ENCODE measurements at regions of chr1 and their contacts with region 1.

Region 1: GRCh38 chr1:167401260-167401873 is 117.0 kb downstream of the CD247 start:
- DNase-seq: peak; percentile 69
- ATAC-seq: peak; percentile 77
- H3K4me3 Mint-ChIP-seq: no peak overlapping the region
- H3K27ac Mint-ChIP-seq: no peak overlapping the region
- H3K4me1 Mint-ChIP-seq: peaks cover 2% of the 10 kb centered on the region
- H3K27me3 Mint-ChIP-seq: no peaks in the 10 kb centered on the region
- CTCF ChIP-seq: peak; percentile 68

Region 2: GRCh38 chr1:167252986-167253385 is 148.4 kb before region 1 on chr1:
- CTCF ChIA-PET with region 1: no interaction called
- POLR2A ChIA-PET with region 1: no interaction called
- intact Hi-C with region 1: no loop called
- DNase-seq: no peak
- ATAC-seq: no peak
- H3K4me3 Mint-ChIP-seq: no peak overlapping the region
- H3K27ac Mint-ChIP-seq: no peak overlapping the region
- H3K4me1 Mint-ChIP-seq: peaks cover 47% of the 10 kb centered on the region
- H3K27me3 Mint-ChIP-seq: no peaks in the 10 kb centered on the region
- CTCF ChIP-seq: no peak

Region 3: DNA sequence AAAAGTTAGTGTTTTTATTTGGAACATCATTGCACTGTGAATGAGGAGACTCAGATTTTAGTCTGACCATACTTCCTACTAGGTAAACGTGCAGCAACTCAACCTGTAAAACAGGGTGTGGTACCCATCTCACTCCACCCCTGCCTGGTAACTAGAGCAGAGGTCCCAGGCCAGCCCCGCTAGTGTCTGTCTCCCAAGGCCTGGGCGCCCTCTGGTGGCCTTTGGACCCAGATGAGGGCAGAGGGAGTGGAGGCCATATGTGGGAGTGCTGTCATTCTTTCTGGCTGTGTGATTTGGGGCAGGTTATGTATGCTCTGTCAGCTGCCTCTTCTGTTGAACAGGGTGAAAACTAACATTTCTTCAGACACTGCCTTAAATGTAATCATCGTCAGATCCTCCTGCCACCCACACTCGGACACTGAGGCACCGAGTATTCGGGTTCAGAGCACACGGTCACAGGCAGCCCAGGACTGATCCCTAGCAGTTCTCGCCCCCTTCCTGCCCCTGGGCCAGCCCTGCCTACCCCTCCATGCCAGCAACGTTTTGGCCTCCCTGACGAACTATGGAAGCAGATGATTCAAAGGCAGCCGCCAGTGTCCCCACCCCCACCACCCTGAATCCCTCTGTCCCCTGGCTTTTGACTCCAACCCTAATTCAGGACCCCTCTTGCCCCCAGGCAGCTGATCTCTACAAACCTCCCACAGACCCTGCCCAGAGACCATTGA is 40.9 kb after region 1 on chr1:
- CTCF ChIA-PET with region 1: interaction called, 23 read pairs
- POLR2A ChIA-PET with region 1: no interaction called
- intact Hi-C with region 1: loop called (anchors 5 kb)
- DNase-seq: peak; percentile 93
- ATAC-seq: peak; percentile 73
- H3K4me3 Mint-ChIP-seq: no peak overlapping the region
- H3K27ac Mint-ChIP-seq: peak overlapping the region; percentile 68
- H3K4me1 Mint-ChIP-seq: peaks cover 88% of the 10 kb centered on the region
- H3K27me3 Mint-ChIP-seq: no peaks in the 10 kb centered on the region
- CTCF ChIP-seq: peak; percentile 88

Region 4: DNA sequence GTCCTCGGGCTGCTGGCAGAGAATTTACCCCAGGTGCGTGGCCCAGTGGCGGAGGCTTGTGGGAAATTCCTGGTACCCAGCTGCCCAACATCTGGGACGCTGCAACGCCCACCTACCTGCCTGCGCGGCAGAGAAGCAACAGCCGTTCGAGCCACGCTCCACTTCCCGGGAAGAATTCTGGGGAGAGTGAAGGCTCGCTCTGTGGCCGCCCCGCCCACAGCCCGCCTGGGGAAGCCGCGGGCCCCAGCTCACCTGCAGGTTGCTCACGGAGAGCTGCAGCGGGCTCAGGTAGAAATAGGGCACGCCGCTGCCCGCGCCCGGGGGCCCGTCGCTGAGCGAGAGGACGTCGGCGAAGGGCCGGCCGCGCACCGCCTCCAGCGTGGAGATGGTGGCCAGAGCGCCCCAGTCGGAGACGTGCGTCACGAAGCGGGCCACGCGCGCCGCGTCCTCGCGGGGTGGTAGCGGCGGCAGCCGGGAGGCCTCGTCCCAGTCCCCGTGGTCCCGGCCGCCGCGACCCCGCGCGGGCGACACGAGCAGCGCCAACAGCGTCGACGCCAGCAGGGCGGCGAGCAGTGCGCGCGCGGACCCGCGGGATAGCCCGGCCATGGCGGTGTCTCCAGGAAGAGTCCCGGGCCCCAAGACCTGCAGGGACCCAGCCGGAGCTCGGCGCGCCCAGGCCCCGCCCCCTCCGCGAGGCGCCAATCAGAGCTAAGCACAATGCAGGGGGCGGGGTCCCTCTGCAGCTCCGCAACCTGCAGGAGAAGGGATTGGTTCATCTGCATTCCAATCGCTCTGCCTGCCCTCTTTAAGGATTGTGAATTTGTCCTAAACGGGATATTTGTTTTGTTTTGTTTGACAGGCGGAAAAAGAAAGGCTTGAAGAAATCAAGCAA is 152.0 kb after region 1 on chr1 and contains the start of gene CREG1:
- CTCF ChIA-PET with region 1: interaction called, 21 read pairs
- POLR2A ChIA-PET with region 1: no interaction called
- intact Hi-C with region 1: no loop called
- DNase-seq: peak; percentile 92
- ATAC-seq: peak; percentile 100
- H3K4me3 Mint-ChIP-seq: peak within 1 kb of the TSS; percentile 86
- H3K27ac Mint-ChIP-seq: peak within 1 kb of the TSS; percentile 23
- H3K4me1 Mint-ChIP-seq: peaks cover 32% of the 10 kb centered on the region
- H3K27me3 Mint-ChIP-seq: no peaks in the 10 kb centered on the region
- CTCF ChIP-seq: no peak
- total RNA-seq, gene CREG1: 9.7 to 10.0 TPM